ENCODE measurements at regions of chr15 and their contacts with region 1.

Region 1: DNA sequence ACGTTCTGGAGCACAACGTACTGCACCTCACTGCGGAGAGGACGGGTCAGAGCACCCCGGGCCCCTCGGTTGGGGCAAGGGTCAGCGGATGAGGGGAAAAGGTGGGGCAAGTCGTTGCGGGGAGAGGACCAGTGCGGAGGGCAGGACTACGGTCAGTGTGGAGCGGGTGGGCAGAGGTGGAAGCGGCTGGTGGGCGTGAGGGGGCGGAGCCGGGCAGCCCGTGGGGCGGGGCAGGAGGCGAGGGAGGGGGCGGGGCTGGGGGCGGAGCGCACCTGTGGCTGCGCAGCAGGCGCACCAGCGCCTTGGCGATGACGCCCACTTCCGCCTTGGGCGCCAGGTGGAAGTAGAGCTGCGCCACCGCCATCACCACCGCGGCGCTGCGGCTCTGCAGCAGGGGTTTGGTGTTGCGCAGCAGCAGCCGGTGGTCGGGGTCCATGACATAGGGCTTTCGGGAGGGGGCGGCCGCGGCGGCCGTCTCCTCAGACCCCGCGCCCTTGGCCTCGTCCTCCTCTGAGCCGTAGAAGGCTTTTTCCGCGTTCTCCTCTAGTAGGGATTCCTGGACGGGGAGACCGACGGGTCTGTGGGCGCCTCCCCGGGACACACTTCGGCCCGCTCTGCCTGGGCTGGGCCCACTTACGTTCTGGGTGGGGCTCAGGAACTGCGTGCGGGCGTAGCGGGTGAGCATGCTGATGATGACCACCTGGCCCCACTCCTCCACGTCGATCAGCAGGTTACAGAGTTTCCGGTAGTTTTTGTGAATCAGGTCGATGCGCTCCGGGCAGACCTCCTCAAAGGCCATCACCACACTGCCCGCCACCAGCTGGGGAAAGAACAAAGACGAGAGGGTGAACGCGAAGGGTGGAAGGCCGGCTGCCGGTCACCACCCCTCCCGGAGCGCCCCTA is 29.2 kb downstream of the AP3B2 start:
- DNase-seq: peak; percentile 92 to 98 (median 96)
- ATAC-seq: peak; percentile 98
- H3K4me3 ChIP-seq: peak overlapping the region; percentile 85
- H3K27ac ChIP-seq: peak overlapping the region; percentile 70
- H3K4me1 ChIP-seq: peaks cover 14 to 23% of the 10 kb centered on the region in 2 experiments; a peak in 4 of 5 replicates
- H3K27me3 ChIP-seq: peaks cover 0 to 9% of the 10 kb centered on the region in 2 experiments; a peak in 1 of 5 replicates
- CTCF ChIP-seq: peak; percentile 45 to 72 (median 56); a peak in 5 of 6 replicates
- EP300 ChIP-seq: no peak
- POLR2A ChIP-seq: peak; percentile 91
- RAD21 ChIP-seq: peak in 1 of 2 experiments; percentile 49; a peak in 2 of 4 replicates

Region 2: GRCh38 chr15:82540055-82540983 is 140.1 kb before region 1 on chr15 and contains the start of gene RPS17:
- CTCF ChIA-PET with region 1: no interaction called
- POLR2A ChIA-PET with region 1: interaction called, 24 read pairs
- in situ Hi-C with region 1: no loop called
- intact Hi-C with region 1: no loop called
- DNase-seq: peak; percentile 98 to 99 (median 98)
- ATAC-seq: peak; percentile 93
- H3K4me3 ChIP-seq: peak within 1 kb of the TSS; percentile 95
- H3K27ac ChIP-seq: peak within 1 kb of the TSS; percentile 93
- H3K4me1 ChIP-seq: peaks cover 10 to 17% of the 10 kb centered on the region in 2 experiments; a peak in 4 of 5 replicates
- H3K27me3 ChIP-seq: no peaks in the 10 kb centered on the region
- CTCF ChIP-seq: peak; percentile 96 to 98 (median 97)
- EP300 ChIP-seq: peak; percentile 25; the same call in 1 of the 2 replicates
- POLR2A ChIP-seq: peak; percentile 99
- RAD21 ChIP-seq: peak; percentile 45 to 57
- polyA plus RNA-seq, gene RPS17: 1,988 to 2,233 TPM

Region 3: GRCh38 chr15:82809404-82810060 is 129.1 kb after region 1 on chr15 and contains the start of gene WHAMM:
- CTCF ChIA-PET with region 1: no interaction called
- POLR2A ChIA-PET with region 1: no interaction called
- in situ Hi-C with region 1: no loop called
- intact Hi-C with region 1: loop called (anchors 5 kb)
- DNase-seq: peak; percentile 98 to 99 (median 98)
- ATAC-seq: peak; percentile 96
- H3K4me3 ChIP-seq: peak within 1 kb of the TSS; percentile 94
- H3K27ac ChIP-seq: peak within 1 kb of the TSS; percentile 93
- H3K4me1 ChIP-seq: peaks cover 12 to 21% of the 10 kb centered on the region in 2 experiments; a peak in 4 of 5 replicates
- H3K27me3 ChIP-seq: no peaks in the 10 kb centered on the region
- CTCF ChIP-seq: peak in 2 of 3 experiments; percentile 19 to 44; a peak in 2 of 6 replicates
- EP300 ChIP-seq: no peak
- POLR2A ChIP-seq: peak; percentile 91
- RAD21 ChIP-seq: no peak
- polyA plus RNA-seq, gene WHAMM: 2.0 to 2.3 TPM

Measured in K562 (cell line).